ENCODE measurements at regions of chr14 and their contacts with region 1.

Region 1: DNA sequence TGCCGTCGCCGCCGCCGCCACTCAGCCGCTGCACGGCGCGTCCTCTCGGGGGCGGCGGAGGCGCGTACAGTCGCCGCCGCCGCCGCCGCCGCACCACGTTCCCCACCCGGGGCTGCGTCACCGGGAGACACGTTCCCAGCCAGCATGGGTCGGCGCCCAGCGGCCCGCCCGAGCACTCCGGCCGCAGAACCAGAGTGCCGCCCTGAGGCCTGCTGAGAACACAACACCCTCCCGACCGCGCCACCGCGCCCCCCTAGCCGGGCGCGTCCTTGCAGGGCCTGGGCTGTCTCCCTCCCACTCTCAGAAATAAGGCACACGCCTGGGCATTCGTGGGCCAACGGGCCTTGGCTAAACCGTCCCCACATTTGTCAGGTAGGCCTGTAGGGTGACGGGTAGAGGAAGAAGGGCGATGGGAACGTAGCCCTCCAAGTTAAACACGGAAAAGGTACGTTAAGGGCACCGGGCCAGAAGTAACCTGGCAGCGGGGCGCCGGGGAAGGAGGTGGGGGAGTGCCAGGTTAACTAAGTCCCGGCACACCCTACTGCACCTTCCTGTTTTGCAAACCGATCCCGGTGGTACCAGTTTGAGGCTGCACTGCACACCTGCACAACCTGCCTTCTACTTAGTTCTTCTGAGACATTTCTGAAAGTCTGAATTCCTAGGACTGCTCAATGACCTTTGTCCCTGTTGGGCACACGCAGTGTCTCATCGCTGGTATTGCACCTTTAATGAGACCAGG is at the start of gene MAP4K5:
- DNase-seq: peak; percentile 91 to 94
- ATAC-seq: peak; percentile 90
- total RNA-seq, gene MAP4K5: 37.5 to 42.6 TPM

Region 2: DNA sequence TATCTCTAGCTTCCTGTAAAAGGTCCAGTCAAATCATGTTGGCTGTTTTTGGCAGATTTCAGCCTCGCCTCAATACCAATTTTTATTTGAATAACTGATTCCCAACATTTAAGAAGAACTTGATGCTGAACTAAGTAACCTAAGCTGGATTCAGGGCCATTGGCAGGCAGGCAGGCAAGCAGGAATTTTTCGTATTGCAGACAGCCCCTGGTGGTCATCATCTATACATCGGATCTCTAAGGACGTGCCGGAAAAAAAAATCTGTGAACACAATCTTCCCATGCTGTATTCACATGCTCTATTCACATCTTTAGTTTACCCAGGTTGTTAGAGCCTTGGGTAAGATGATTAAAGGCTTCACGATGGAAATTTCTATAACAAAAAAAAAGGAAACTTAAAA is 423.3 kb before region 1 on chr14:
- intact Hi-C with region 1: no loop called
- DNase-seq: no peak
- ATAC-seq: no peak

Region 3: GRCh38 chr14:50311975-50312733 is 220.5 kb before region 1 on chr14 and contains the starts of genes DMAC2L and L2HGDH:
- intact Hi-C with region 1: loop called in 1 of 2 experiments (anchors 10 kb)
- DNase-seq: peak; percentile 93 to 94
- ATAC-seq: peak; percentile 94
- total RNA-seq, gene DMAC2L: 21.0 to 24.7 TPM
- total RNA-seq, gene L2HGDH: 9.0 to 9.4 TPM

Region 4: DNA sequence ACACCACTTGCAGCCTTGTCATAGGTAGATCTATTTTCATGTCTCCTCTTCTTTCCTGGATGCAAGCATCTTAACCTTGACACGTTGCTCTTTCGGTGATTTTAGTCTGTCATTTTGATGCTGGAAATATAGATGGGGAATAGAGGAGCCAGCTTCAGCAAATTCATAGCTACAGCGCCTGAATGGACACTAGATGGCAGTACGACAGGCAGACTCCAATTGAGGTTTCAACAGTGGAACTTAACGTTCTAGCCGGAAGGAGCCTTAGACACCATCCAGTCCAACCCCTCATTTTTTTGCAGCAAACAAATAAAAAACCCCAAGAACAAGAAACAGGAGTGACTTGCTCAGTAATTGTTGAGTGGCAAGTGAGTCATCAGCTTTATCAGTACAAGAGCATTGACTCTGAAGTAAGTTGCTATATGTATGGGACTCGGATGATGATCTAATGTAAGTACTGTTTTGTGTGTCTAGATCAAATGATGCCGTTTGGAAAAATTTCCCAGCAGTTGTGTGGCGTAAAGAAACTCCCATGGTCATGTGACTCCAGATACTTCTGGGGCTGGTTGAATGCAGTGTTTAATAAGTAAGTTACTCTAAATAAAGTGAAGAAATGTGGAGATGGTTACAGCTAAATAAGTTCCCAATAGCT is 211.5 kb before region 1 on chr14:
- intact Hi-C with region 1: loop called (anchors 2 to 10 kb)
- DNase-seq: peak; percentile 63
- ATAC-seq: peak; percentile 92